ENCODE measurements at regions of chr19 and their contacts with region 1.

Region 1: DNA sequence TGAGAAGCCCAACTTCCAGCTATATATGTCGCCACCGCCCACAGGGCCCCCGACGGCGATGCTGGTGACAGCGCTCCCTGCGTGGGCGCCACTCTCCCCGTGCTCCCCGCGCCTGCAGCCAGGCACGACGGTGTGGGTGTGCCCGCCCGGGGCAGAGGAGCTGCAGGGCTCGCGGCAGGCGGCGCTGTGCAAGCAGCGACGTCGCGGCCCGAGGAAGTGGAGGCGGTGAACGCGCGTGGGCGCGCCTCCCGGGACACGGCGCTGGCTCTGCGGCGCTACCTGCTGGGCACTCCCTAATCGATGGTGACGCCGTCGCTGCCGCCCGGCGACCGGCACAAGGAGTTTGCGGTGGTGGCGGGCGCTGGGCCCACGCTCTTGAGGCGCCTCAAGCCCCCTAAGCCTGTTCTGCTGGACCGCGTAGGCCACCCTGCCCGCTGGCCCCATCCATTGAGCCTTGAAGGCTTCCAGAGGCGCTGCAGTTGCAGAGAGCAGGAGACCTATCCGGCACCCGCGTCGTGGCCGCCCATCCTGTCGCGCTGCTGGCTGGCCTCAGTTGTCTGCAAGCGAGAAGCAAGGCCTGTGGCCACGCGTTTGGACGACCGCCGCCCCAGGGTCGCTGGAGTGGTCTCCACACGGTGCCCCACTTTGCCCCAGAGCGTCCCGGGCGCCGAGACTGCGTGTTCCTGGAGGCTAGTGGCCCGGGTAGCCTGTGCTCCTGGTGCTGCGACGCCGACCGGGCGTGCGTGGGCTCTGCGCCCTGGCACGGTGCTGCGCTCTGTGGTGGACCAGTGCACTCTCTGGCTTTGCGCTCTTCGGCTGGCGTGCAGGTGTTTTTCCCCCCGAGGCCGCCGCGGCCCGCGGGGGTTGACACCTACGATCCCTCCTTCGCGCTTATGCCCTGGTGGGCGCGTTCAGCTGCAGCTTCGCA is 23.1 kb downstream of the LRFN3 start:
- DNase-seq: peak; percentile 54 to 70 (median 67)
- H3K4me3 ChIP-seq: peak overlapping the region in 4 of 7 experiments; percentile 13 to 48 (median 30)
- H3K27ac ChIP-seq: no peak overlapping the region
- H3K4me1 ChIP-seq: peaks cover 0 to 10% (median 8%) of the 10 kb centered on the region in 4 experiments
- H3K27me3 ChIP-seq: peaks cover 0 to 51% (median 15%) of the 10 kb centered on the region in 5 experiments

Region 2: GRCh38 chr19:35983177-35983576 is 23.9 kb after region 1 on chr19:
- CTCF ChIA-PET with region 1: no interaction called
- POLR2A ChIA-PET with region 1: no interaction called
- DNase-seq: no peak
- H3K4me3 ChIP-seq: no peak overlapping the region
- H3K27ac ChIP-seq: no peak overlapping the region
- H3K4me1 ChIP-seq: peaks cover 0 to 8% (median 5%) of the 10 kb centered on the region in 4 experiments
- H3K27me3 ChIP-seq: peaks cover 0 to 29% (median 11%) of the 10 kb centered on the region in 5 experiments

Region 3: DNA sequence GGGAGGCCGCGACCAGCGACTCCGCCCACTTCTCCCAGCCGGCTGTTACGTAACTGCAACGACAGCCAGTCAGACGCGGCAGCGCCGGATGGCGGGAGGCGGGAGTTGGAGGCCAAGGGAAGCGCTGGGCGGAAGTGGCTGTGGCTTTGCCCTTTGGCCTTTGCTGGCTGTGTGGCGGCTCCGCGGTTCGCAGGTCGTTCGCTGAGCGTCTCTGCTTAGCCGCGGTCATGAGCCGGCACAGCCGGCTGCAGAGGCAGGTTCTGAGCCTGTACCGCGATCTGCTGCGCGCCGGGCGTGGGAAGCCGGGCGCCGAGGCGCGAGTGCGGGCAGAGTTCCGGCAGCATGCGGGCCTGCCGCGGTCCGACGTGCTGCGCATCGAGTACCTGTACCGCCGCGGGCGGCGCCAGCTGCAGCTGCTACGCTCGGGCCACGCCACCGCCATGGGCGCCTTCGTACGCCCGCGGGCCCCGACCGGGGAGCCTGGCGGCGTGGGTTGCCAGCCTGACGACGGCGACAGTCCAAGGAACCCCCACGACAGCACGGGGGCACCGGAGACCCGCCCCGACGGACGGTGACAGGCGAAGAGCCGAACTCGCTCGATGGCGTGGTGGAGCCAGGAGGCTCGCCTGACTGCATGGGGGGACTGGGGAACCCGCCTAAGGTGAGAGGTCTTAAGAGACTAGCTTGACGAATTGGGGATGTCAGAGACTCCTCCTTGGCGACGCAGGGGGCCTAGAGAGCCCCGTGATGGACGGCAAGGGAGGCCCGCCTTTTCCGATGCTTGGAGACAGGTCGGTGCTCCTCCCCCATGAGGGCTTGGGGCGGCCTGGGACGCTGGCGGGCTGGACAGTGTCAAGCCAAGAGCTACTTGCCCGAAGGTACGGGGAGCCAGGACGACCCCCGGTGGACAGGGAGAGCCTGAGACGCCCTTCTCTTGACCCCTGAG is 36.0 kb after region 1 on chr19 and contains the start of gene SDHAF1:
- CTCF ChIA-PET with region 1: interaction called, 11 read pairs
- POLR2A ChIA-PET with region 1: no interaction called
- DNase-seq: peak; percentile 88 to 92 (median 89)
- H3K4me3 ChIP-seq: peak within 1 kb of the TSS; percentile 54 to 92 (median 83)
- H3K27ac ChIP-seq: peak within 1 kb of the TSS; percentile 7 to 72
- H3K4me1 ChIP-seq: peaks cover 5 to 28% (median 25%) of the 10 kb centered on the region in 4 experiments
- H3K27me3 ChIP-seq: no peaks in the 10 kb centered on the region